ENCODE measurements at regions of chr6 and their contacts with region 1.

Region 1: DNA sequence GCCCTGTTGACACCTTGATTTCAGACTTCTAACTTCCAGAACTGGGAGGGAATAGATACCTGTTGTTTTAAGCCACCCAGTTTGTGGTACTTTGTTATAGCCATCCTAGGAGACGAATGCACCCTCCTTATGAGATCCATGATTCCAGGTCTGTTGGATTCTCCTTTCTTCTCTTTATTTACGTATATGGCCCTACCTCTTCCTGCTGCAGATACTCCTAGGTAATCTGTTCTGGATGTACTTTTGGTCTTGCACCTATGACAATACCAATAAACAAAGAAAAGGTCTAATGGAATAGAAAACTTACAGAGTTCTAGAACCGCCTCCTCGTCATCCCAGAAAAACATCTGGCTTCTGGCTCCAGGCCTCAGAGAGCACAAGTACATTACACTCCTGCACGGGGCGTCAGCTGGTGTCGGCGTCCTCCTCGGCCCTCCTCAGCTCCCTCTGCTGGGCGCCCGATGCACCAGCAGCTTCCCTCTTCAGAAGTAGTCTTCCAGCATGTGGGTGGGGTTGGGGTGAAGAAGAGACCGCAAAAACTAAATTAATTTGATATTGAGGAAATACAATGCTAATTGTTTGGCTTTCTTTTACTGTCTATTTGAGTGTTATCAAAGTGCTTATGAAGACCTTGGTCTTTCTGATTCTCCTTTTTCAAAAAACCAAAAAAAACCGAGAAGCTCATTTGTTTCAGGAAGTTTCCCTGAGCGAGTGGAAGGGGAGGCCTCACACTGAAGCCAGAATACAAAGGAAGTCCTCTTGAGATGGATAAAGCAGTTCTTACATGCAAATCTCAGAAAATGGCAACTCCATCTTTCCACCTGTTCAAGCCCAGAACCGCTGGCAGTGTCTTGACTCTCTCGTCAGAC is 9.7 kb upstream of the ATXN1 start:
- DNase-seq: peak; percentile 82
- ATAC-seq: peak; percentile 67
- H3K4me3 Mint-ChIP-seq: peak overlapping the region; percentile 35
- H3K27ac Mint-ChIP-seq: no peak overlapping the region
- H3K4me1 Mint-ChIP-seq: peaks cover 65% of the 10 kb centered on the region
- H3K27me3 Mint-ChIP-seq: peaks cover 3% of the 10 kb centered on the region

Region 2: GRCh38 chr6:16319813-16320532 is 451.0 kb before region 1 on chr6:
- CTCF ChIA-PET with region 1: interaction called, 13 read pairs
- POLR2A ChIA-PET with region 1: interaction called, 3 read pairs
- DNase-seq: peak; percentile 79
- ATAC-seq: peak; percentile 79
- H3K4me3 Mint-ChIP-seq: peak overlapping the region; percentile 61
- H3K27ac Mint-ChIP-seq: peak overlapping the region; percentile 94
- H3K4me1 Mint-ChIP-seq: peaks cover 76% of the 10 kb centered on the region
- H3K27me3 Mint-ChIP-seq: no peaks in the 10 kb centered on the region

Region 3: DNA sequence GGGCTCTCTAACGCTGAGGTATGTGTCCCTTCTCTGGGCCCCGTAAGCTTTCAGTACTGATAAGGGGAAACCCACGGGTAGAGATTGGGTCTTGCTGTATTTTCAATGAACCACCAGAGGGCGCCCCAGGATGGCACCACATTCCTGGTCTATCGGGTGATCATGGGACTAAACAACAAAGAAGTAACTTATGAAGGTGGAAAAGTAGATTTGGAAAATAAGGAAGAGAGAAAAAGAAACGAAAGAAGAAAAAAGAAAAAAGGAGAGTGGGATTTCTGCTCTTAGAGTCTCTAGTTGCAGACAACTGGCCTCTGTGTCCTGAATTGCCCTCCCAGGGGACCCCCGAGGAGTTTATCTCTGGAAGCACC is 438.8 kb before region 1 on chr6:
- CTCF ChIA-PET with region 1: interaction called, 16 read pairs
- POLR2A ChIA-PET with region 1: no interaction called
- DNase-seq: peak; percentile 86
- ATAC-seq: peak; percentile 94
- H3K4me3 Mint-ChIP-seq: no peak overlapping the region
- H3K27ac Mint-ChIP-seq: no peak overlapping the region
- H3K4me1 Mint-ChIP-seq: no peaks in the 10 kb centered on the region
- H3K27me3 Mint-ChIP-seq: no peaks in the 10 kb centered on the region

Region 4: DNA sequence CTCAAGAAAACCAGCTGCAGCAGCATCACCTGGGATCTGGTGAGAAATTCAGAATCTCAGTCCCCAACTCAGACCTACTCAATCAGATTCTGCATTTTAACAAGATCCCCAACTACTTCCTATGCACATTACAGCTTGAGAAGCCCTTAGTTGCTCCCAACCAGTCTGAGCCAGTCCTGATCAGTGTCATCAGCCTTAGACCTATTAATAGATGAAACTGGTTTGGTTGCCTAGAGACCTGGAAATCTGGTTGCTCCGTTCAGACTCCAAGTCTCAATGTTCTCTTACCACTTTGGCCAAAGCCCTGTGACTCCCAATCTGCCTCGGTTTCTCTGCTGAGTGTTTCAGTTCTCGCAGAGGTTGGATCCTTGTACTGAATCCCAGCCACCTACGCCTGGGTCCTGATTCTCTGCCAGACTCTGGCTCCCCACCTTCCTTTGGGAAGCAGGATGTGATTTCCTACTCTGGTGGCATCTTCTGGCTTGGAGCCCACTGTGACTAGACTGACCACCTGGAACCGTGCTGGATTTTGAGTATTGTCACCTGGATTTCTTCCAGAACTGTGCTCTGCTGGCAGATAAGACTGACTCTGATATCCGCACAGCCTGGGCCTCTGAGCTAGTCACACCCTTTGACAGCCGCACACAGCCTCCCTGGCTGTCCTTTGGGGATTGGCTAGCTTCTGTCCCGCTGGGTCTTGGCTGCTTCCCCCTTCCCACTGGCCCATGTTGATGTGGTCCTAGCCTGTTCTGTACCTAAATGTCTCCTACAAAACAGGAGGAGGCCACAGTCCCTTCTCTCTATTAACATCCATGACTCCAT is 10.6 kb after region 1 on chr6:
- CTCF ChIA-PET with region 1: interaction called, 67 read pairs
- POLR2A ChIA-PET with region 1: no interaction called
- DNase-seq: no peak
- ATAC-seq: no peak
- H3K4me3 Mint-ChIP-seq: no peak overlapping the region
- H3K27ac Mint-ChIP-seq: no peak overlapping the region
- H3K4me1 Mint-ChIP-seq: no peaks in the 10 kb centered on the region
- H3K27me3 Mint-ChIP-seq: peaks cover 5% of the 10 kb centered on the region

Region 5: DNA sequence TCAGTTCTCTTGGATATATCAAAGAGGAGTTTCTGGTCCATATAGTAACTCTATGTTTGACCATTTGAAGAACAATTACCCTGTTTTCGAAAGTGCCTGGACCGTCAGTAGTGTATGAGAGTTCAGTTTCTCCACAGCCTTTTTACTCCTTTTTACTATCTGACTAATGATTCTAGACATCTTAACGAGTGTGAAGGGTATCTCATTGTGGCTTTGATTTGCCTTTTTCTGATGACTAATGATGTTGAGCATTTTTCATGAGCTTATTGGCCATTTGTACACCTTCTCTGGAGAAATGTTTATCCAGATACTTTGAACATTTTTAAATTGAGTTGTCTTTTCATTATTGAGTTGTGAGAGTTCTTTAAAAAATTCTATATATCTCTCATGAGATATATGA is 105.3 kb after region 1 on chr6:
- CTCF ChIA-PET with region 1: no interaction called
- POLR2A ChIA-PET with region 1: no interaction called
- DNase-seq: no peak
- ATAC-seq: no peak
- H3K4me3 Mint-ChIP-seq: no peak overlapping the region
- H3K27ac Mint-ChIP-seq: no peak overlapping the region
- H3K4me1 Mint-ChIP-seq: no peaks in the 10 kb centered on the region
- H3K27me3 Mint-ChIP-seq: peaks cover 33% of the 10 kb centered on the region

Region 6: GRCh38 chr6:16964553-16965501 is 193.9 kb after region 1 on chr6:
- CTCF ChIA-PET with region 1: interaction called, 50 read pairs
- POLR2A ChIA-PET with region 1: no interaction called
- DNase-seq: peak; percentile 71
- ATAC-seq: peak; percentile 87
- H3K4me3 Mint-ChIP-seq: no peak overlapping the region
- H3K27ac Mint-ChIP-seq: no peak overlapping the region
- H3K4me1 Mint-ChIP-seq: peaks cover 5% of the 10 kb centered on the region
- H3K27me3 Mint-ChIP-seq: peaks cover 9% of the 10 kb centered on the region

Region 7: DNA sequence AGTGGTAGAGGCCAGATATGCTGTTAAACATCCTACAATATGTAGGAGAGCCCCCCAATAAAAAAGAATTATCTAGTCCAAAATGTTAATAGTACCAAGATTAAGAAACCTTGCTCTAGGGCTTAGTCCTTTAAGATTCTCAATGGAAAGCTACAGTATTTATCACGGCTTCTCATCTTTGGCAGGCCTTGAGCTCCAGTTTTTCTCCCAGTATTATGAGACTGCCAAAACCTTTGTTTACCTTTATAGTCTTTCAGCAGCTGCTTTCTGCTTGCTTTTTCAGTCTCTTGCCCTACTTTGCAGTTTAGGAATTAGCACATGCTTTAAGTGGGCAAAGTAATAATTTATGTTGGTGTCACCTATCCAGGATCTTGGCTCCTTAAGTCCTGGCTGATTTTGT is 1291.8 kb after region 1 on chr6:
- CTCF ChIA-PET with region 1: no interaction called
- POLR2A ChIA-PET with region 1: no interaction called
- DNase-seq: no peak
- ATAC-seq: no peak
- H3K4me3 Mint-ChIP-seq: no peak overlapping the region
- H3K27ac Mint-ChIP-seq: no peak overlapping the region
- H3K4me1 Mint-ChIP-seq: no peaks in the 10 kb centered on the region
- H3K27me3 Mint-ChIP-seq: no peaks in the 10 kb centered on the region